Caco-2 (cell line): ENCODE measurements at regions of chr5 and their contacts with region 1.

Region 1: DNA sequence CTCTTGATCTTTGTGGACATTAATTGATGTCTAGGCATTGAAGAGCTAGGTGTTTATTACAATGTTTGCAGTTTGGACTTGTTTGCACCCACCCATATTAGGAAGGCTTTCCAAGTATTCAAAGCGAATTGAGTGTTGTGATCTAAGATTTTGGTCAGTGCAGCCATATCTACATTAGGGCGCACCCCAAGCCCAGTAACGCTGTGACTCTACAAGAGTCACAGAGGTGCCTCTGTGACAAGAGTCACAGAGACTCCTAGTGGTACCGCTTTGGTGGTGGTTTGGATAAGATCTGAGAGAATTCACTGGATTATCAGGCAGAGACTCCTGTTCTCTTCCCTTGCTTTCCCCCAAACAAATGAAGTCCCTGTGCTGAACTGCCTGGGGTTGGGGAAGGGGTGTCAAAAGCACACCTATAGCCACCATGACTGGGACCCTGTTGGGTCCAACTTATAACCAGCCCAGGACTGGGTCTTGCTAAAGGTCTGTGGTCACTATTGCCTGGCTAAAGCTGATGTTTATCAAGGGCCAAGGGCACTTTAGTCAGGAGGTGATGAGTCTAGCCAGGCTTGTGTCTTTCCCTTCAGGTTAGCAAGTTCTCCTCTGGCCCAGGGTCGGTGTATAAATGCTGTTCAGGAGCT is 114.1 kb upstream of the RIOK2 start:
- DNase-seq: peak; percentile 67 to 69
- H3K4me3 ChIP-seq: no peak overlapping the region
- H3K4me3 Mint-ChIP-seq: no peak overlapping the region
- H3K27ac Mint-ChIP-seq: no peak overlapping the region
- H3K4me1 ChIP-seq: no peaks in the 10 kb centered on the region
- H3K4me1 Mint-ChIP-seq: no peaks in the 10 kb centered on the region
- H3K27me3 ChIP-seq: no peaks in the 10 kb centered on the region
- H3K27me3 Mint-ChIP-seq: no peaks in the 10 kb centered on the region
- CTCF ChIP-seq: peak; percentile 66 to 67

Region 2: GRCh38 chr5:97231025-97231636 is 66.1 kb before region 1 on chr5:
- CTCF ChIA-PET with region 1: interaction called, 3 read pairs
- POLR2A ChIA-PET with region 1: no interaction called
- intact Hi-C with region 1: loop called (anchors 1 kb)
- DNase-seq: peak in 1 of 2 experiments; percentile 72
- H3K4me3 ChIP-seq: no peak overlapping the region
- H3K4me3 Mint-ChIP-seq: no peak overlapping the region
- H3K27ac Mint-ChIP-seq: no peak overlapping the region
- H3K4me1 ChIP-seq: no peaks in the 10 kb centered on the region
- H3K4me1 Mint-ChIP-seq: no peaks in the 10 kb centered on the region
- H3K27me3 ChIP-seq: no peaks in the 10 kb centered on the region
- H3K27me3 Mint-ChIP-seq: no peaks in the 10 kb centered on the region
- CTCF ChIP-seq: peak; percentile 77 to 82

Region 3: GRCh38 chr5:97534166-97534565 is 237.0 kb after region 1 on chr5:
- CTCF ChIA-PET with region 1: interaction called, 11 read pairs
- POLR2A ChIA-PET with region 1: no interaction called
- intact Hi-C with region 1: loop called (anchors 1 kb)
- DNase-seq: peak; percentile 47 to 62
- H3K4me3 ChIP-seq: no peak overlapping the region
- H3K4me3 Mint-ChIP-seq: no peak overlapping the region
- H3K27ac Mint-ChIP-seq: no peak overlapping the region
- H3K4me1 ChIP-seq: no peaks in the 10 kb centered on the region
- H3K4me1 Mint-ChIP-seq: no peaks in the 10 kb centered on the region
- H3K27me3 ChIP-seq: no peaks in the 10 kb centered on the region
- H3K27me3 Mint-ChIP-seq: no peaks in the 10 kb centered on the region
- CTCF ChIP-seq: peak; percentile 65 to 72

Region 4: GRCh38 chr5:97906135-97906534 is 609.0 kb after region 1 on chr5:
- CTCF ChIA-PET with region 1: no interaction called
- POLR2A ChIA-PET with region 1: no interaction called
- intact Hi-C with region 1: no loop called
- DNase-seq: no peak
- H3K4me3 ChIP-seq: no peak overlapping the region
- H3K4me3 Mint-ChIP-seq: no peak overlapping the region
- H3K27ac Mint-ChIP-seq: no peak overlapping the region
- H3K4me1 ChIP-seq: no peaks in the 10 kb centered on the region; the same call in 1 of the 2 replicates
- H3K4me1 Mint-ChIP-seq: no peaks in the 10 kb centered on the region
- H3K27me3 ChIP-seq: no peaks in the 10 kb centered on the region
- H3K27me3 Mint-ChIP-seq: no peaks in the 10 kb centered on the region
- CTCF ChIP-seq: no peak

Region 5: DNA sequence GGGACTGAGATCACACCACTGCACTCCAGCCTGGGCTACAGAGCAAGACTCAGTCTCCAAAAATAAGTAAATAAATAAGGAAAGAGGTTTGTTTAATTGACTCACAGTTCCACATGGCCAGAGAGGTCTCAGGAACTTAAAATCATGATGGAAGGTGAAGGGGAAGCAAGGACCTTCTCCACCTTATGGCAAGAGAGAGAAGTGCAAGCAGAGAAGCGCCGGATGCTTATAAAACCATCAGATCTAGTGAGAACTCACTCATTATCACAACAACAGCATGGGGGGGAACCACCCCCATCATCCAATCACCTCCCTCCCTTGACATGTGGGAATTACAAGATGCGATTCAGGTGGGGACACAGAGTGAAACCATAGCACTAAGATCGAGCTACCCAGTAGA is 1453.5 kb after region 1 on chr5:
- CTCF ChIA-PET with region 1: no interaction called
- POLR2A ChIA-PET with region 1: no interaction called
- intact Hi-C with region 1: loop called (anchors 1 kb)
- DNase-seq: peak in 1 of 2 experiments; percentile 26
- H3K4me3 ChIP-seq: no peak overlapping the region
- H3K4me3 Mint-ChIP-seq: no peak overlapping the region
- H3K27ac Mint-ChIP-seq: no peak overlapping the region
- H3K4me1 ChIP-seq: no peaks in the 10 kb centered on the region
- H3K4me1 Mint-ChIP-seq: no peaks in the 10 kb centered on the region
- H3K27me3 ChIP-seq: no peaks in the 10 kb centered on the region
- H3K27me3 Mint-ChIP-seq: peaks cover 6% of the 10 kb centered on the region
- CTCF ChIP-seq: peak; percentile 40 to 60

Region 6: GRCh38 chr5:98768160-98769005 is 1471.2 kb after region 1 on chr5:
- CTCF ChIA-PET with region 1: no interaction called
- POLR2A ChIA-PET with region 1: no interaction called
- intact Hi-C with region 1: loop called (anchors 1 kb)
- DNase-seq: peak; percentile 56 to 64
- H3K4me3 ChIP-seq: peak overlapping the region; percentile 46
- H3K4me3 Mint-ChIP-seq: peak overlapping the region; percentile 82
- H3K27ac Mint-ChIP-seq: no peak overlapping the region
- H3K4me1 ChIP-seq: peaks cover 8% of the 10 kb centered on the region
- H3K4me1 Mint-ChIP-seq: peaks cover 9% of the 10 kb centered on the region
- H3K27me3 ChIP-seq: no peaks in the 10 kb centered on the region; the same call in 1 of the 2 replicates
- H3K27me3 Mint-ChIP-seq: no peaks in the 10 kb centered on the region
- CTCF ChIP-seq: peak; percentile 77 to 89

Region 7: DNA sequence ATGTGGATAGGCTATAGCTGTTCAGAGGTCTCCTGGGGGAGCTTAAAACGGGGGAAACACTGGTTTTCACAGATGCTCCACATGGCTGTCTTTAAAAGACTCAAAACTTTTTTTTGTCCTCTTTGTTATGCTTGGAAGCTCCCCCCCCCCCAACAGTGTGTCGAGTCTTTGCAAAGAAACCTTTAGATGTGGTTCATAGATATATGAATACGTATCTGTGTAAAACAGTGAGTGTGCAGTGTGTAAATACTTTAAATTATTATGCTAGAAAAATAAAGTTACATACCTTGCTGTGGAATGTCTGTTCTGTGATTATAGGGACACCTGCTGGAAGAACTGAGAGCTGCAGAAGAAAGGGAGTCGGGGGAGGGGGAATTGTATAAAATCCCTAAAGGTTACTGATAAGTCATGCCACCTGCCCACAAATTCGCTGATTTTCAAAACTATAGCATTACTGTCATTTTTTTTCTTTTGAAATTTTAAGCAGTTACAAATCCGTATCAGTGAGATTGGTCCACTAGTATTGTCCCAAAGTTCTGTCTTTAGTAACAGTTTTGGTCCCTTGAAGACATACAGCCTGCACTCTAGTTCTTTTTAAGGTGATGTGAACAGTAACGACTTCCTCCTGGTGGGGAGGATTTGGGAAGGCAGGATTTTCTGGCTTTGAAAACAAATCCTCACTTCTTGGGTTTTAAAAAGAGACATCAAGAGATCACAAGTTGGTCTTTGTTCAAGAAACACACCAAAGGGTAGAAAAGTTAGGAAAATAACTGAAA is 1499.2 kb after region 1 on chr5:
- CTCF ChIA-PET with region 1: interaction called, 5 read pairs
- POLR2A ChIA-PET with region 1: no interaction called
- intact Hi-C with region 1: loop called (anchors 1 kb)
- DNase-seq: peak; percentile 62 to 71
- H3K4me3 ChIP-seq: no peak overlapping the region
- H3K4me3 Mint-ChIP-seq: peak overlapping the region; percentile 17
- H3K27ac Mint-ChIP-seq: peak overlapping the region; percentile 62
- H3K4me1 ChIP-seq: no peaks in the 10 kb centered on the region
- H3K4me1 Mint-ChIP-seq: peaks cover 7% of the 10 kb centered on the region
- H3K27me3 ChIP-seq: no peaks in the 10 kb centered on the region
- H3K27me3 Mint-ChIP-seq: no peaks in the 10 kb centered on the region
- CTCF ChIP-seq: peak; percentile 65 to 86

Region 8: GRCh38 chr5:98827161-98827560 is 1530.0 kb after region 1 on chr5:
- CTCF ChIA-PET with region 1: no interaction called
- POLR2A ChIA-PET with region 1: no interaction called
- intact Hi-C with region 1: loop called (anchors 1 kb)
- DNase-seq: peak in 1 of 2 experiments; percentile 56
- H3K4me3 ChIP-seq: no peak overlapping the region
- H3K4me3 Mint-ChIP-seq: no peak overlapping the region
- H3K27ac Mint-ChIP-seq: no peak overlapping the region
- H3K4me1 ChIP-seq: no peaks in the 10 kb centered on the region
- H3K4me1 Mint-ChIP-seq: no peaks in the 10 kb centered on the region
- H3K27me3 ChIP-seq: no peaks in the 10 kb centered on the region
- H3K27me3 Mint-ChIP-seq: no peaks in the 10 kb centered on the region
- CTCF ChIP-seq: peak; percentile 54 to 58